Right ventricle myocardium superior (tissue), 1 donor: ENCODE measurements at regions of chr10 and their contacts with region 1.

Region 1: GRCh38 chr10:69914398-69915214 is 112.9 kb downstream of the COL13A1 start:
- DNase-seq: peak; percentile 82
- ATAC-seq: peak; percentile 87

Region 2: DNA sequence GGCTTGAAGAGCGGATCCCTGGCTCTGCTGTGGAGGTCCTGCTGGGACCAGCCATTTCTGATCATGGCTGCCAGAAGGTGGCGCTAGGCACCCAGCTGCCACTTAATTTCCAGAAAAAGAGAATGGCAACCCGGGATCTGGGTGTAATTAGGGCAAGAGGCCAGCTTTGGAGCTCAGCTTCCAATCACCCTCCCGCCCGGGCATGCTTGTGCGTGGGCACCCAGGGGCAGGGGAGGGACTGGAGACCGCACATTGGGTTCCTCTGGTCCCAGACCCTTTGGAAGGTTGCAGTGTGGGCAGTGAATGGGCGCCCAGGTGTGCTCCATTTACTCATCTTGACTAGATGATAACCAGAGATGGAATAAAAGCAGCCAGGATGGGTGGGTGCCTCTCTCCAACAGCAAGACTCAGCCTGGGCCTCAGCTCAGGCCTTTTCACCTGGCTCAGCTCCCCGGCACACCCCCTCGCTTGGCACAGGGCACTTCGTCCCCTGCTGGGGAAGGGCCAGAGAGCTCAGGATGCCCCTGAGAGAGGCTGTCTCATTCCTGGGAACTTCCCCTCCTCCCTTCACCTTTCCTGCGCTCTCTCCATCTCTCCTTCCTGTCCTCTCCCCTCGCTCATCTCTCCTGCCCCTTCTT is 269.8 kb before region 1 on chr10:
- intact Hi-C with region 1: loop called (anchors 2 kb)
- DNase-seq: peak; percentile 66
- ATAC-seq: peak; percentile 72

Region 3: GRCh38 chr10:69786791-69787190 is 127.8 kb before region 1 on chr10:
- intact Hi-C with region 1: loop called (anchors 10 kb)
- DNase-seq: no peak
- ATAC-seq: no peak